GM10248 (cell line): ENCODE measurements at regions of chr12 and their contacts with region 1.

Region 1: DNA sequence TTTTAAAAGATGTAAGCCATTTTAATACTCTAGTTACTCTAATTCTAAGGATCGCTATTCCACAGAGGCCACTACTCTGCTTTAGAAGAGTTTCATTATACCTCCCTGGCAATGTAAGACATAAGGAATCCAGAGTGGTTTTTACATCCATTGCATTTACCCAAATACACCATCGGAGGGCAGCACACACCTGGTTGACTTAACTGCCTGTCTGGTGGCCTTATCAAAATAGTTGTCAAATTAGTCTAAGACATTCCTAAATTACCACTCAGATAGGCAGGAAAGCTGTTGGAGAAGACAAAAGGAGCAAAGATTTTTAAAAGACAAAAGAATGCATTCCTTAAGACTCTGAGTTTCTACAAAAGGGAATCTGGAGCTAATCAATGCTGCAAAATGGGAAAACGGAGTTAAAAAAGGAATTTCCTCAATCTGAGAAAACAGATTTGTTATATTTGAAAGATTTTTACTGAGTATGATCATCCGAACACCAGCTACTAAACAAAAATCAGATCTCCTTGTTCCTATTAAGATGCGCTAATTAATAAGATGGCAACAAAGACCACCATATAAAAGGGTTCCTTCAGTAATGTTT is 33.8 kb upstream of the FGD4 start:
- DNase-seq: peak; percentile 64
- CTCF ChIP-seq: peak; percentile 74

Region 2: GRCh38 chr12:31849090-31849687 is 516.4 kb before region 1 on chr12:
- CTCF ChIA-PET with region 1: no interaction called
- POLR2A ChIA-PET with region 1: no interaction called
- DNase-seq: no peak
- CTCF ChIP-seq: no peak

Region 3: GRCh38 chr12:32240831-32241230 is 124.7 kb before region 1 on chr12:
- CTCF ChIA-PET with region 1: no interaction called
- POLR2A ChIA-PET with region 1: no interaction called
- DNase-seq: no peak
- CTCF ChIP-seq: no peak

Region 4: DNA sequence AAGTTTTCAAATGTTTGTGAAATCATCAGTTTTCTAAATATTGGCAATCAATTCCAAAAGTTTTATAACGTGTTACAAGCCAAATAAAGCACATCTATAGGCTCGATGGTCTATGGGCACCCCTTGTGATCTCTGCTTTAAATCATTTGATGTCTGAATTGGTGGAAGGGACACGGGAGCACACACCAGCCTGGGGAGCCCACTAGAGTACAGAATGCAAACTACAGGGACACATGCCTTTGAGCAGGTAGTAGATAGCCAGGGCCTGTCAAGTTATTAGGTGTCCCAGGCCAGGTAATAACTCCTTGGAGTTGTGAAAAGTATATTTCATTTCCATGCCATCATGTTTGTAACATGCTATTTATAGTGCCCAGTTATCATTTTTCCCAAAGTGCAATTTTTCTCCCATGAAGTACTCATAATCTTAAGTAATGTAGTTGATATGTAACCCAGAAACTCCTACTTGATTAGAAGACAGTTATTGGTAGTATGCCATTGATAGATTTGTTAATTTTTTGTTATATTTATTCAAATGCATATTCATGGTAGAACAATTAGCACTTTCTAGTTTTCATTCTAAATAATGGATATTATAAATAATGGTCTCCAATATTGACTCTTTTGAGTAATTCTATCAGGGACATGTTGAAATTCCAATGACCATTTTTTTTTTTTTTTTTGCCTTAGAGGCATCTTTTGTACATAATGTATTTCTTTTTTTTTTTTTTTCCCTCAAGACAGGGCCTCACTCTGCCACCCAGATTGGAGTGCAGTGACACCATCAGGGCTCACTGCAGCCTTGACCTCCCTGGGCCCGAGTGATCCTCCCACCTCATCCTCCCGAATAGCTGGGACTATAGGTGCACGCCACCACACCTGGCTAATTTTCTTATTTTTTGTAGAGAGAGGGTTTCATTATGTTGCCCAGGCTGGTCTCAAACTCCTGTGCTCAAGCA is 63.1 kb before region 1 on chr12:
- CTCF ChIA-PET with region 1: no interaction called
- POLR2A ChIA-PET with region 1: no interaction called
- DNase-seq: peak; percentile 74
- CTCF ChIP-seq: peak; percentile 80

Region 5: DNA sequence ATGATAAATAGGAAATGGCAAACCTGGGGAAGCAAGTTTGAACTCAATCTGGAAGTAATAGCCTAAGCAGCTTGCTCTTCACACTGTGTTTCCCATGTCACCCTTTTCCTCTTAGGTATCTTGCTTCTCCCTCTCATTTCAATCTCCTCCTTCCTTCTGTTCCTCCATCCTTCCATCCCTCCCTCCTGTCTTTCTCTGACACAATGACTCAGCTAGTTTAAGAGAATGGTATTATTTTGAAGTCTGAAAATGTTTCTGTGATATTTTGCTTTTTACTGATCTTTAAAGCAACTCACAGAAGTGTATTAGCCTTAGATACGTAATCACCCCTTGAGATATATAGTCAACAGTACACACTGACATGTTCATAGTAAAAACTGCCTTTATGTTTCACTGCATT is 22.1 kb before region 1 on chr12:
- CTCF ChIA-PET with region 1: no interaction called
- POLR2A ChIA-PET with region 1: no interaction called
- DNase-seq: no peak
- CTCF ChIP-seq: no peak

Region 6: DNA sequence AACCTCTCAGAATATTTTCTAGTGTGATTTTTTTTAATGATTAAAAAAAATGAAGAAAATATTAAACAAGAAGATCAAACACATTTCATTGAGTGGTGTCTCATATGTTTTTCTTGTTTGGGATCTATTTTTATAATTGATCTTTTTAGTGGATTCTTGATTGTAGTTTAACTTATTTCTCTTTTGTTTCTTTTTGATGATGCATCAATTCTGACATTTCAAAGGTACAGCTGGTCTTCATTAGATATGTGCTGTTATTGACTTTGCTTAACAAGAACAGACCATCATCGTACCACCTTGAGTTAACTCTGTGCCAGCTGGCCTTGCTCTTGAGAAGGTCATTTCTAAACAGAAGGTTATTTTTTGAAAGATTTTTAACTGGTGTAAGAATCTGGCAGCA is 12.0 kb before region 1 on chr12:
- CTCF ChIA-PET with region 1: interaction called, 11 read pairs
- POLR2A ChIA-PET with region 1: no interaction called
- DNase-seq: no peak
- CTCF ChIP-seq: no peak

Region 7: DNA sequence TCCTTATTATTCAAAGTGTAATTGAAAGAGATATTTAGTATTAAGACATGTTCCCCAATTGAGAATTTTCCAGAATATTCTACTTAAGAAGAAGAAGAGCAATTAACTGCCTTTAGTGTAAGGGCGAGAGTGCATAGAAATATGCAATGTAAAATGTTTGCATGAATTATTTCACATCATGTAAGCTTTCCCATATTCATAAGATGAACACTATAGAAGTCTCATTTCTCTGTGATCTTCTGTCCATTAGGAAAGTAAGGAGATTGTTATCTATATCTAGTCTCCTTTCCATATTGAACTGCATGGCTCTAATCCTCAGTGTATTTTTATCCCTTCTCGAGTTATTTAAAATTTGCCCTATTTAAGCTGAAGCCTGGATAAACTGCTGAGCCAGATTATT is 16.7 kb after region 1 on chr12:
- CTCF ChIA-PET with region 1: interaction called, 12 read pairs
- POLR2A ChIA-PET with region 1: no interaction called
- DNase-seq: no peak
- CTCF ChIP-seq: no peak